MCF 10A (cell line): ENCODE measurements at regions of chr5 and their contacts with region 1.

Region 1: GRCh38 chr5:127040796-127041520 is 10.6 kb upstream of the MARCHF3 start:
- DNase-seq: peak; percentile 82
- H3K4me3 Mint-ChIP-seq: peak overlapping the region; percentile 63
- H3K27ac Mint-ChIP-seq: peak overlapping the region; percentile 95
- H3K4me1 Mint-ChIP-seq: peaks cover 27% of the 10 kb centered on the region
- H3K27me3 Mint-ChIP-seq: no peaks in the 10 kb centered on the region
- CTCF ChIP-seq: no peak

Region 2: GRCh38 chr5:126846344-126846743 is 194.6 kb before region 1 on chr5:
- CTCF ChIA-PET with region 1: no interaction called
- POLR2A ChIA-PET with region 1: no interaction called
- intact Hi-C with region 1: loop called (anchors 2 kb)
- DNase-seq: peak; percentile 17
- H3K4me3 Mint-ChIP-seq: no peak overlapping the region
- H3K27ac Mint-ChIP-seq: no peak overlapping the region
- H3K4me1 Mint-ChIP-seq: no peaks in the 10 kb centered on the region
- H3K27me3 Mint-ChIP-seq: no peaks in the 10 kb centered on the region
- CTCF ChIP-seq: no peak

Region 3: DNA sequence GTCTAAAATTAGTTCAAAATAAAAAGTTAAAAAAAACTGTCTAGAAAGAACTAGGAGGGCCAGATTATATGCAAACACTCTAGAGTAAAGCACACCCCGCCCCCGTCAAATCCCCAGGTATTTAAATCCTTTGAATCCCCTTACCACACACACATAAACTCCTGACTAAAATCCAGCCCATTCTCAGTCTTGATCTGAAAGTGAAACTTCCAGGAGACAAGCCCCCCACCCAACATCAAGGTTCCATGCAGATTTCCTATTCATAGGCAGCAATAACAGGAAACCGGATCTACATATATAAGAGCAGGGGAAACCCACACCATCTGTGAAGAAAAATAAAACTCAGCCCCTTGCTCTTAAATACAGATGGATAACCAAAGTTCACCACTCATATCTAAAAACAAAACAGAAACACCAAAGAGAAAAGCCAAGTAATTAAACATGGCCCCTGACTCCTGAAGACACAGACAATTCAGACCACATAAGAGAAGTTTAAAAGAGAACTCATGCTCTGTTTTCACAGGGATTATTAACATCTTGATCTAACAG is 52.9 kb before region 1 on chr5:
- CTCF ChIA-PET with region 1: no interaction called
- POLR2A ChIA-PET with region 1: no interaction called
- intact Hi-C with region 1: no loop called
- DNase-seq: no peak
- H3K4me3 Mint-ChIP-seq: no peak overlapping the region
- H3K27ac Mint-ChIP-seq: no peak overlapping the region
- H3K4me1 Mint-ChIP-seq: no peaks in the 10 kb centered on the region
- H3K27me3 Mint-ChIP-seq: no peaks in the 10 kb centered on the region
- CTCF ChIP-seq: no peak

Region 4: GRCh38 chr5:127064253-127064840 is 23.4 kb after region 1 on chr5:
- CTCF ChIA-PET with region 1: no interaction called
- POLR2A ChIA-PET with region 1: interaction called, 21 read pairs
- intact Hi-C with region 1: no loop called
- DNase-seq: peak; percentile 74
- H3K4me3 Mint-ChIP-seq: no peak overlapping the region
- H3K27ac Mint-ChIP-seq: no peak overlapping the region
- H3K4me1 Mint-ChIP-seq: peaks cover 8% of the 10 kb centered on the region
- H3K27me3 Mint-ChIP-seq: no peaks in the 10 kb centered on the region
- CTCF ChIP-seq: no peak